H1 (cell line): ENCODE measurements at regions of chr12 and their contacts with region 1.

Region 1: DNA sequence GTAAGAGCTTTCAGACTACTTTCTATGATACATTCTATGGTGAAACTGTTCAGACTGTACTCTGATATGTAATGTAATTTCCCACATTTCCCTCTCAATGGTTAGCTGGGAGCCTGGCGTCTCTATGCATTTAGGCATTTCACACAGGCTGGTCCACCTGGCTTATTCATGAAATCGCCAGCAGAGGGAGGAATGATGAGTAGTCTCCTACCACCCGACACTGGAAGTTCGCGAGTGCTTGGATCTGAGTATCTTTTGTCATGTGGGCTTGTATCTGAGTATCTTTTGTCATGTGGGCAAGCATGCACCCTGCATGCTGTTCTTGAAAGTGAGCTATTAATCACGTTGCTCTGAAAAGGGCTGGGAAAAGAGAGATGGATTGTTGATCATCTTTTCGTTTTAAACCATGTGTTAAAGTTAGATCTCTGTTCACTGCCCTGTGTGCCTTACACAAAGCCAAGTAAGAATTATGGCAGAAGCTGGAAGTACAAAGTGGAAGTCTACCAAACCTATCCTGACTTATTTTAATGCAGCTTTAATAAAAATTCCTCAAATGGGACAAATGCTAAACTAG is 235.0 kb downstream of the ATP23 start:
- DNase-seq: peak; percentile 10 to 64
- H3K4me3 ChIP-seq: no peak overlapping the region
- H3K27ac ChIP-seq: no peak overlapping the region
- H3K4me1 ChIP-seq: peaks cover 0 to 7% (median 0%) of the 10 kb centered on the region in 4 experiments; a peak in 2 of 7 replicates
- H3K27me3 ChIP-seq: no peaks in the 10 kb centered on the region
- CTCF ChIP-seq: peak; percentile 58 to 87 (median 66)
- EP300 ChIP-seq: no peak
- POLR2A ChIP-seq: no peak
- RAD21 ChIP-seq: peak; percentile 66 to 71

Region 2: GRCh38 chr12:58159941-58160340 is 16.4 kb before region 1 on chr12:
- CTCF ChIA-PET with region 1: interaction called, 36 read pairs
- POLR2A ChIA-PET with region 1: no interaction called
- DNase-seq: no peak
- H3K4me3 ChIP-seq: no peak overlapping the region
- H3K27ac ChIP-seq: no peak overlapping the region
- H3K4me1 ChIP-seq: no peaks in the 10 kb centered on the region
- H3K27me3 ChIP-seq: no peaks in the 10 kb centered on the region; a peak in 1 of 7 replicates
- CTCF ChIP-seq: no peak
- EP300 ChIP-seq: no peak
- POLR2A ChIP-seq: no peak
- RAD21 ChIP-seq: no peak

Region 3: DNA sequence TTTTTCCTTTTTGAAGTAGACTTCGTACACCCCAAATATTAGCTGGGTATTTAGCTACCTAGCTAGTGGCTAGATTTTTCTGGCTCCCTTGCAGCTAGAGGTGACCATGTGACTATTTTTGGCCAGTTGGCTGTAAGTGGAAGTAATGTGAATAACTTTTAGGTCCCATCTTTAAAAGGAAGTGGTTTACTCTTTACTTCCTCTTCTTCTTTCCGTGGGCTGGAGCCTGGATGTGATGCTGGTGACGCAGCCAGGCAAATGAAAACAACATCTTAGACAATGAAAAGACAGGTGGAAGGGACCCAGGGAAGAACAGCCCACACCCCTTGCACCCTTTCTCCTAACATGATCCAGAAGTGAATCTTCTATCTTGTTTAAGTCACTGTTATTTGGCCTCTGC is 10.5 kb after region 1 on chr12:
- CTCF ChIA-PET with region 1: interaction called, 20 read pairs
- POLR2A ChIA-PET with region 1: no interaction called
- DNase-seq: no peak
- H3K4me3 ChIP-seq: no peak overlapping the region
- H3K27ac ChIP-seq: no peak overlapping the region
- H3K4me1 ChIP-seq: no peaks in the 10 kb centered on the region
- H3K27me3 ChIP-seq: no peaks in the 10 kb centered on the region
- CTCF ChIP-seq: no peak
- EP300 ChIP-seq: no peak
- POLR2A ChIP-seq: no peak
- RAD21 ChIP-seq: no peak

Region 4: DNA sequence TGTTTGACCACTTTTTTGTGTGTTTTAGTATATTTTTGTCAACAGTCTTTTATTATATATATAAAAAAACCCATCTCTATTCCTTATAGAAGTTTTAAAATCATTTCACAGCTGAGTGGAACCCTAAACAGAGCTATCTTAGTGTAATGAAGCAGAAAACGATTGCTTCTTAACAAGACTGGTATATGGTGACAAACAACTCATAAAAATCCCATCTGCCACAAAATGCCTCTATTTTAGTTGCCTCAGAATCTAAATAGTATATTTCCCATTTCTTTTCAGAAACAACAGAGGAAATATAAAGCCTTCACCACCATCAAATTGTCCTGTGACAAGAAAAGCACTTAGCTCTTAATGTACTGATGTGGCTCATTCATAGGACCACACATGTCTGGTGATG is 87.4 kb after region 1 on chr12:
- CTCF ChIA-PET with region 1: interaction called, 11 read pairs
- POLR2A ChIA-PET with region 1: no interaction called
- DNase-seq: no peak
- H3K4me3 ChIP-seq: no peak overlapping the region
- H3K27ac ChIP-seq: no peak overlapping the region
- H3K4me1 ChIP-seq: no peaks in the 10 kb centered on the region
- H3K27me3 ChIP-seq: no peaks in the 10 kb centered on the region
- CTCF ChIP-seq: no peak
- EP300 ChIP-seq: no peak
- POLR2A ChIP-seq: no peak
- RAD21 ChIP-seq: no peak